ENCODE measurements at regions of chr15 and their contacts with region 1.

Region 1: GRCh38 chr15:40906091-40906990 is 12.1 kb downstream of the VPS18 start:
- DNase-seq: peak; percentile 84 to 93
- H3K4me3 ChIP-seq: peak overlapping the region; percentile 38 to 56
- H3K27ac ChIP-seq: peak overlapping the region; percentile 84 to 93
- H3K4me1 ChIP-seq: peaks cover 12 to 36% (median 25%) of the 10 kb centered on the region in 4 donors
- H3K27me3 ChIP-seq: no peaks in the 10 kb centered on the region
- CTCF ChIP-seq: peak; percentile 74 to 81

Region 2: GRCh38 chr15:40941528-40942336 is 35.4 kb after region 1 on chr15:
- intact Hi-C with region 1: loop called (anchors 5 kb)
- DNase-seq: peak; percentile 73 to 85
- H3K4me3 ChIP-seq: peak overlapping the region; percentile 60 to 62
- H3K27ac ChIP-seq: peak overlapping the region; percentile 87 to 89
- H3K4me1 ChIP-seq: peaks cover 0 to 50% (median 26%) of the 10 kb centered on the region in 4 donors
- H3K27me3 ChIP-seq: no peaks in the 10 kb centered on the region
- CTCF ChIP-seq: peak; percentile 45 to 95

Region 3: GRCh38 chr15:41022487-41023090 is 116.2 kb after region 1 on chr15:
- intact Hi-C with region 1: loop called (anchors 2 kb)
- DNase-seq: peak in 1 of 2 donors; percentile 25
- H3K4me3 ChIP-seq: no peak overlapping the region
- H3K27ac ChIP-seq: peak overlapping the region; percentile 40 to 76
- H3K4me1 ChIP-seq: peaks cover 0 to 64% (median 42%) of the 10 kb centered on the region in 4 donors
- H3K27me3 ChIP-seq: no peaks in the 10 kb centered on the region
- CTCF ChIP-seq: peak; percentile 69

Region 4: DNA sequence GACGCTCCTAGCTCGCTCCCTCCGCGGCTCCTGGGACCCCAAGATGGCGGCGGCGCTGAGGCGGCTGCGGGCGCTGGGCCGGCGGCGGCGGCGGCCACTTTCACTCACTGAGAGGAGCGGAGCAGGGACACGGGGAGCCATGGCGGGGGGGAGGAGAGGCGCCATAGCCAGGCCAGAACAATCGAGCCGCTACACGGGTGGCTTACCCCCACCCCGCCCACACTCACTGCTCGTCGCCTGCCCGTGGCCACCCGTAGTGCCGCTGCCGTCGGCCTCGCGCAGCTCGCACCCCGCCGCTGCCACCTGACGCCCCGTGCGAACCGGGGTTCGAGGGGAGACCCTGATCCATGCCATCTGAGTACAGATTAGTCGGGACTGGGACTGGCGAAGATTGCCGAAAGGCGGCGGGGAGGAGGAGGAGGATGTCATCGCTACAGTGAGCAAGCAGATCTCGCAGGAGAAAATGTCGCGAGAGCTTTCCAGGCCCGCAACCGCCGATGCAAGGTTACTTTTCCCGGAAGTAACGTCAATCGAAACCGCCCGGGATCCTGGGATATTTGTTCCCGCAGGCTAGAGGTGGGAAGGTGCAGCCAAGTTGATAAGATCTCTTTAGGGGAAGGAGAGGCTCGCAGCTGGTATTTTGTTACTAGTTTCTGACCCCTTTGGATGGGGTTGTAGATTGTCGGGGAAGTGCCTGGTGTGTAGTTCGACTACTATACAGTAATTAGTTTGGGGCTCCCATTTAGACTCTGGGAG is 210.0 kb after region 1 on chr15 and contains the start of gene INO80:
- intact Hi-C with region 1: loop called (anchors 10 kb)
- DNase-seq: peak; percentile 98 to 99
- H3K4me3 ChIP-seq: peak within 1 kb of the TSS; percentile 87 to 91
- H3K27ac ChIP-seq: peak within 1 kb of the TSS; percentile 99
- H3K4me1 ChIP-seq: peaks cover 0 to 25% (median 11%) of the 10 kb centered on the region in 4 donors
- H3K27me3 ChIP-seq: no peaks in the 10 kb centered on the region
- CTCF ChIP-seq: peak in 1 of 2 experiments; percentile 32

Region 5: GRCh38 chr15:41180206-41180789 is 274.0 kb after region 1 on chr15:
- intact Hi-C with region 1: loop called (anchors 5 kb)
- DNase-seq: no peak
- H3K4me3 ChIP-seq: no peak overlapping the region
- H3K27ac ChIP-seq: no peak overlapping the region
- H3K4me1 ChIP-seq: no peaks in the 10 kb centered on the region
- H3K27me3 ChIP-seq: no peaks in the 10 kb centered on the region
- CTCF ChIP-seq: no peak

Measured in tibial artery (tissue), 4 donors.